ENCODE measurements at regions of chr4 and their contacts with region 1.

Region 1: DNA sequence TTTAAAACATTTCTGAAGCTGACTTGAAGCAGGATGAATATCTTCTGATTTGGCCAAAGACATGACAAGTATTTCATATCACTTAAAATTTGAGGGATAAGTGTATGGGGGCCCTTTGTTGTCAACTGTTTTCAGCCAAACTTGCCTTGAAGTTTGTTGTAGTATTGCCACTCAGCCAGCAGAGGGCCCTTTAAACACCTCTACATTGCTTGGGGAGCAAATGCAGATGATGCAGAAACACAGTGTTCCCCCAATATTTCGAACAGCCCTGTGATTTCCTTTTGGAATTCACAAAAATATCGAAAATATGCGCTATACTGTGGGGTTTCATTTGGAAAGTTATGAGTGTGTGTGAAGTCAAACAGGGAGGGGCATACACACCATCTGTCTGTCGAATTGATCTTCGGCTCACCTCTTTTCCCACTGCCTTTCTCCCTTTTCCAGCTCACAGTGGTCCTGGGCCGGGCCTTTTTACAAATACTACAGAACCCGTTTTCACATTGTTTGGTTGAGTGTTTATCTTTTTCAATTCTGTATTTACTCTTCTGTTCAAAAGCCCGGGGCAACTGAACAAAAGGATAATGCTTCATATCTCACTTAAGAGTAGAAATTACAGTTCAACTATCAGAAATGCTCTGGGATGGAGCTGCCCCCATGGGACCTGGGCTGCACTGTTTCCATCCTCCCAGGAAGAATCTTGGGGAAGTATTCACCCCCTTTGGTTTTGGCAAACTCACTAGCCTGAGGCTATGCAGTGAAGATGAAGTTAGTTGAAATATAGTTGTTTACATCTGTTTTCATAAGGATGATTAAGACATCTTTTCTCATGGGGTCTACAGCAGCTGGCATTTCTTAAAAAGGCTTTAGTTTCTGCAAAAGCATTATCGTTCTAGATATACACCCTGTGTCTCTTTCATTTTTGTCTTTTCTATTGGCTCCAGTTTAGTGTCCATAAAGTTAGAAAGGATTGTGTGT is 137.6 kb downstream of the EGF start:
- DNase-seq: peak; percentile 40
- H3K4me3 ChIP-seq: no peak overlapping the region
- H3K27ac ChIP-seq: no peak overlapping the region
- H3K4me1 ChIP-seq: no peaks in the 10 kb centered on the region
- H3K27me3 ChIP-seq: no peaks in the 10 kb centered on the region
- CTCF ChIP-seq: peak; percentile 64 to 76 (median 72)
- EP300 ChIP-seq: no peak
- POLR2A ChIP-seq: no peak

Region 2: GRCh38 chr4:110201502-110201901 is 151.3 kb after region 1 on chr4:
- in situ Hi-C with region 1: loop called (anchors 5 to 25 kb)
- intact Hi-C with region 1: no loop called
- DNase-seq: no peak
- H3K4me3 ChIP-seq: no peak overlapping the region
- H3K27ac ChIP-seq: no peak overlapping the region
- H3K4me1 ChIP-seq: peaks cover 0 to 7% (median 5%) of the 10 kb centered on the region in 4 donors
- H3K27me3 ChIP-seq: no peaks in the 10 kb centered on the region
- CTCF ChIP-seq: no peak
- EP300 ChIP-seq: no peak
- POLR2A ChIP-seq: no peak

Region 3: GRCh38 chr4:110211007-110211769 is 160.9 kb after region 1 on chr4:
- in situ Hi-C with region 1: loop called (anchors 5 to 25 kb)
- intact Hi-C with region 1: loop called (anchors 10 kb)
- DNase-seq: peak; percentile 25
- H3K4me3 ChIP-seq: no peak overlapping the region
- H3K27ac ChIP-seq: no peak overlapping the region
- H3K4me1 ChIP-seq: peaks cover 0 to 3% (median 0%) of the 10 kb centered on the region in 4 donors
- H3K27me3 ChIP-seq: no peaks in the 10 kb centered on the region
- CTCF ChIP-seq: peak; percentile 72 to 84 (median 76)
- EP300 ChIP-seq: no peak
- POLR2A ChIP-seq: no peak

Measured in transverse colon (tissue), 4 donors.